ENCODE measurements at regions of chr2 and their contacts with region 1.

Region 1: GRCh38 chr2:159968279-159968900 is 94.0 kb downstream of the PLA2R1 start:
- DNase-seq: peak; percentile 68
- H3K4me3 Mint-ChIP-seq: no peak overlapping the region
- H3K27ac Mint-ChIP-seq: no peak overlapping the region
- H3K4me1 Mint-ChIP-seq: no peaks in the 10 kb centered on the region
- H3K27me3 Mint-ChIP-seq: no peaks in the 10 kb centered on the region
- CTCF ChIP-seq: peak; percentile 67

Region 2: DNA sequence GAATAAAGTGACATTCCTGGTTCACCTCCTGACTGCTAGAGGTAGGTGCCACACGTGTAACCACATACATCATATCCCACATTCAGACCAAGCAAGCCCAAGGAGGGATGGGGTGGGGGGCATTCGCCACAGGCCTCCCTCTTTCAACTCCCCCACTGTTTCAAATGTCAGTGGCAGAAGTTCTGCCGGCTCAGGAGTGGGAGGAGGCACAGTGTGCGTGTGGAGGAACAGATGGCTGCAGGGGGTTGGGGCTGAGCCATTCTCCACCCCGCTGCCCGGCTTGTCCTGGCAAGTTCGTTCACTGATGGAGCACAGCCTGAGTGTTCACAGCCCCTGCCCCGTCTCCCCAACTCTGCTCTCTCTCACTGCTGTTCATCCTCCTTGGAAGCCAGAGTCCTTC is 1075.4 kb before region 1 on chr2:
- CTCF ChIA-PET with region 1: no interaction called
- POLR2A ChIA-PET with region 1: no interaction called
- intact Hi-C with region 1: loop called (anchors 5 kb)
- DNase-seq: peak; percentile 91
- H3K4me3 Mint-ChIP-seq: peak overlapping the region; percentile 49
- H3K27ac Mint-ChIP-seq: peak overlapping the region; percentile 97
- H3K4me1 Mint-ChIP-seq: peaks cover 46% of the 10 kb centered on the region
- H3K27me3 Mint-ChIP-seq: no peaks in the 10 kb centered on the region
- CTCF ChIP-seq: no peak

Region 3: GRCh38 chr2:159755788-159756187 is 212.6 kb before region 1 on chr2:
- CTCF ChIA-PET with region 1: interaction called, 5 read pairs
- POLR2A ChIA-PET with region 1: interaction called, 3 read pairs
- intact Hi-C with region 1: loop called (anchors 5 kb)
- DNase-seq: peak; percentile 96
- H3K4me3 Mint-ChIP-seq: no peak overlapping the region
- H3K27ac Mint-ChIP-seq: no peak overlapping the region
- H3K4me1 Mint-ChIP-seq: peaks cover 10% of the 10 kb centered on the region
- H3K27me3 Mint-ChIP-seq: no peaks in the 10 kb centered on the region
- CTCF ChIP-seq: no peak

Region 4: DNA sequence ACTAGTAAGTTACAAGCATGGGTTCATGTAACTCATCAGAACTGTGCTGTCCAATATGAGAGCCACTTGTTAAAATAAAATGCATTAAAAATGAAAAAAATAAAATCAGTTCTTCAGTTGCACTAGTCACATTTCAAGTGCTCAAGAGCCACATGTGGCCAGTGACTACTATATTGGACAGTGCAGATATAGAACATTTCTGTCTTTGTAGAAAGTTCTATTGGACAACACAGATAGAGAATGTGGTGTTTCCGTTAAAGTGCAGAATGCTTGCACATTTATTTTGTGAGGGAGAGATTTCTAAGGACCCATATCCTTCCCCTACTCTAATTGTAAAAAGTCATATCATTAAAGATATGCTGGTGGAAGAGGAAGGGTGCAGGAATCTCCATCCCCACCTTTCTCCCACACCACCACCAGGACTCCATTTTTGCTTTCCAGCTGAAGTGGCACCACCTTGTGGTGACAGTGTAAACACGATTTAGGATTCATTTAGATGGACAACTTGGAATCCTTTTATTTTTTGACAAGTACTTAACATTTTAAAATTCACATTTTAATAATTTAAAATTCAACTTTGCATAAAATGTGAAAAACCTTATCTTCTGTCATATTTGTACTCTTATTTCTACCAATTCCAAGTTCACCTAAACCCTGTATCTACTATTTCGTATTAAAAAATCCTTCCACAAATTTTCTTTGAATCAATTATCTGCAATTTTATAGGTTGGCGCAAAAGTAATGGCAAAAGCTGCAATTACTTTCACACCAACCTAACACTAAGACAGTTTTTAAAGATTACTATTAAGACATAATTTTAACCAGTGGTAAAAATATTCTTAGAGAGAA is 161.0 kb before region 1 on chr2:
- CTCF ChIA-PET with region 1: interaction called, 3 read pairs
- POLR2A ChIA-PET with region 1: no interaction called
- intact Hi-C with region 1: loop called (anchors 10 kb)
- DNase-seq: peak; percentile 74
- H3K4me3 Mint-ChIP-seq: no peak overlapping the region
- H3K27ac Mint-ChIP-seq: no peak overlapping the region
- H3K4me1 Mint-ChIP-seq: no peaks in the 10 kb centered on the region
- H3K27me3 Mint-ChIP-seq: peaks cover 24% of the 10 kb centered on the region
- CTCF ChIP-seq: peak; percentile 64

Measured in MCF 10A (cell line).